AG04449 (cell line): ENCODE measurements at regions of chr19 and their contacts with region 1.

Region 1: DNA sequence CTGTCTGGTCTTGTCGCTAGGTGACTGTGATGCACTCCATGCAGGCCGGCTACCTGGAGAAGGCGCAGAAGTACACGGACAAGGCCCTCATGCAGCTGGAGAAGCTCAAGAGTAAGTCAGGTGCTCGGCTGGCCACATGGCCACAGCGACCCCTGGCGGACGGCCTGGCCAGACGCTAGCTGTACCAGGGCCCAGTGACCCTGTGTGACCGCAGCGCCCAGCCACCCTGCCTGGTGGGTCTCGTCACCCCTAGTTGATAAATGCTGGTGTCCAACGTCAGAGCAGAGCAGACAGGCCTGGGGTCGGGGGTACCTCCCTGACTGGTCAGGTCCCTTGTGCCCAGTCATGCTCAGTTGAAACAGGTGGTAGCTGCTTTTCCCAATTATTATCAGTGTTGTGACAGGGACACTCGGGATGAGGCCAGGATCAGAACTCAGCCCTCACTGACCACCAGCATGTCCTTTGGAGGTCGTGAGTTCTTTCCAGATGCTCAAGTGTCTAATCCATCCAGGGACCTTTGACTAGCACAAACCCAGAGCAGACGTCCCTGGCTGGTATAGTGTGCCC is 22.2 kb downstream of the MAU2 start:
- DNase-seq: no peak
- H3K4me3 ChIP-seq: no peak overlapping the region
- CTCF ChIP-seq: peak; percentile 91

Region 2: GRCh38 chr19:19145684-19146608 is 196.9 kb before region 1 on chr19:
- CTCF ChIA-PET with region 1: interaction called, 21 read pairs
- POLR2A ChIA-PET with region 1: no interaction called
- DNase-seq: no peak
- H3K4me3 ChIP-seq: no peak overlapping the region
- CTCF ChIP-seq: peak; percentile 97

Region 3: DNA sequence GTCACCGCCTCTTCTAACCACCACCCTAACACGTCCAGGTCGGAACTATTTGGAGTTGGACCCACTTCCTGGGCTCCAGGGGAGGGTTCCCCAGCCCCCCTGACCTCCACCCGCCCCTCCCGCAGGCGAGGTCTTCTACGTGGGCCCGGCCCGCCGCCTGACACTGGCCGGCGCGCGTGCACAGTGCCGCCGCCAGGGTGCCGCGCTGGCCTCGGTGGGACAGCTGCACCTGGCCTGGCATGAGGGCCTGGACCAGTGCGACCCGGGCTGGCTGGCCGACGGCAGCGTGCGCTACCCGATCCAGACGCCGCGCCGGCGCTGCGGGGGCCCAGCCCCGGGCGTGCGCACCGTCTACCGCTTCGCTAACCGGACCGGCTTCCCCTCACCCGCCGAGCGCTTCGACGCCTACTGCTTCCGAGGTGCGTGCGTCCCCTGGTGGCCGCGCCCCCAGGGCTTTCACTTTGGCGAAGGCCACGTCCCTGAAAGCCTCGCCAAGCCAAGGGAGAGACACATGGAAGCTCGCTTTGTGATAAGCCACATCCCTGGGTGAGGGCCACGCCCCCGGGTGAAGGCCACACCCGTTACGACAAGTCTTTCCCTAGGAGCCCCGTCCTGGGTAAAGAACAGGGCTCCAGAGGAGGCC is 117.9 kb before region 1 on chr19:
- CTCF ChIA-PET with region 1: no interaction called
- POLR2A ChIA-PET with region 1: no interaction called
- DNase-seq: no peak
- H3K4me3 ChIP-seq: peak overlapping the region; percentile 33; the same call in 1 of the 2 replicates
- CTCF ChIP-seq: peak; percentile 76

Region 4: GRCh38 chr19:19320362-19321142 is 22.3 kb before region 1 on chr19 and contains the starts of genes MAU2 and SUGP1:
- CTCF ChIA-PET with region 1: interaction called, 46 read pairs
- POLR2A ChIA-PET with region 1: no interaction called
- DNase-seq: peak; percentile 41
- H3K4me3 ChIP-seq: peak within 1 kb of the TSS; percentile 99
- CTCF ChIP-seq: peak; percentile 60

Region 5: DNA sequence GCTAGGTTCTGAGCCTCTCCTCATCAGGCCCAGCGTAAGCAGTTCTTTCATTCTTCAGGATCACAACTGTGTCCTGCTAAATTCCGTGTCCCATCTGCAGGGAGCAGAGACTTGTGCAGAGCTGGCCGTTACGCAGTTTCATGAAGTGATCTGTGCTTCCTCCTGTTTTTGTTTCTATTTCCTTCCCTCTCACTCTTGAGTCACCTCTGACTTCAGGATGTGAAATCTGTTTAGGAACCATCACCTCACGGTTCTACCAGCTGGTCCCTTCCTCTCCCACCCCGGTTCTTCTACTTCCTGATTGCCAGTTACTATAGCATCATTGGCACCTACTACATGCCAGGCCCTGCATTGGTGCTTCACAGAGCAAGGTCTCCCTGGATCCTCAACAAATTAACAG is 13.7 kb before region 1 on chr19:
- CTCF ChIA-PET with region 1: interaction called, 46 read pairs
- POLR2A ChIA-PET with region 1: no interaction called
- DNase-seq: no peak
- H3K4me3 ChIP-seq: no peak overlapping the region
- CTCF ChIP-seq: no peak

Region 6: GRCh38 chr19:19361075-19361594 is 18.3 kb after region 1 on chr19:
- CTCF ChIA-PET with region 1: interaction called, 31 read pairs
- POLR2A ChIA-PET with region 1: no interaction called
- DNase-seq: peak; percentile 40
- H3K4me3 ChIP-seq: no peak overlapping the region
- CTCF ChIP-seq: peak; percentile 75

Region 7: DNA sequence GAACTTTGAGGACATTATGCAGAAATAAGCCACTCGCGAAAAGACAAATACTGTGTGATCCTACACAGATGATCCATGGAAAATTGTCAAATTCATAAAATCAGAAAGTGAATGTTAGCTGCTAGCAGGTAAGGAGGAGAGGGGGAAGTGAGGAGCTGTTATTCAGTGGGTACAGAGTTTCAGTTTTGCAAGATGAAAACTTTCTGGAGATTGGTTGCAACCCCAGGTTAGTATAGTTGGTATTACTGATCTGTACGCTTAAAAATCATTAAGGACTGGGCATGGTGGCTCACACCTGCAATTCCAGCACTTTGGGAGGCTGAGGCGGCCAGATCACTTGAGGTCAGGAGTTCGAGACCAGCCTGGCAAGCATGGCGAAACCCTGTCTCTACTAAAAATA is 343.7 kb after region 1 on chr19:
- CTCF ChIA-PET with region 1: no interaction called
- POLR2A ChIA-PET with region 1: no interaction called
- DNase-seq: no peak
- H3K4me3 ChIP-seq: no peak overlapping the region
- CTCF ChIP-seq: no peak